HCT116 (cell line): ENCODE measurements at regions of chr16 and their contacts with region 1.

Region 1: DNA sequence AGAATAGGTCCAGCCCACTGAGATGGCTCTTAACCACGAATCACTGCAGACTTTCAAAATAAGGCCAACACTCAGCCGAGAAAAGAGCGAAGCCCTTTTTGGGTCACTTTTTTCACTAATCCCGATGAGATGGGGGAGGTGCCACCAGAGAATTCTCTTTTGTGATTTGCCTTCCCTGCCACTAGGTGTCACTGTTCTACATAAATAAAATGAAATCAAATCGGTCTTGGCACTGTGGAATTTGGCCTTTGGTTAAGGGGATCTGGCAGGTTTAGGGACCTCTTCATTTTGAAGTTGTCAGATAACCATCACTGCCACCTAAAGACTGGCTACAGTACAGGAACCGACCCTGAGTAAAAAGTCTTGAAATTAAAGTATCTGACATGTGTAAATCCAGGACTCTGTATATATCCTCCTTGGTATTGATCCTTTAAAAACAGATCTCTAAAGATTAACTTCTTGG is 147.0 kb downstream of the HS3ST4 start:
- DNase-seq: peak; percentile 27
- ATAC-seq: peak; percentile 57
- H3K4me3 ChIP-seq: no peak overlapping the region
- H3K27ac ChIP-seq: no peak overlapping the region
- H3K4me1 ChIP-seq: no peaks in the 10 kb centered on the region
- H3K27me3 ChIP-seq: no peaks in the 10 kb centered on the region
- CTCF ChIP-seq: peak; percentile 31 to 77 (median 61); a peak in 5 of 6 replicates
- POLR2A ChIP-seq: no peak
- RAD21 ChIP-seq: peak; percentile 60

Region 2: DNA sequence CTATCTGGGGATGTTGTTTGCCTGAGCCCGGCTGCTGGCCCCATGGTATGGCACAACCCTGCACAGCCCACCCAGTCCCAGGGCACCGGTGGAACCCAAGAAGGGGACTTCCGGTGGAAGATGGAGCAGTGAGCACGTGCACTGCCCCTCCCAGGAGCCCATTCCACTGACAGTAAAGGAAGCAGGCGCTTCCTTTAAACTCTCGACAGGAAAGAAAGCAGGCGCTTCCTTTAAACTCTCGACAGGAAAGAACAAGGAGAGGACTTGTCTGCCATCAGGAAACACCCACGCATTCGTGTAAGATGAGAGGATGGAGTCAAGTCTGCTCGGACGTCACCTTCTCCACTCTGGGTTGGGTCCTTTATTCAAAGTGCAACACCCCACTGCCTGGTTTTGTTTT is 1616.9 kb after region 1 on chr16:
- CTCF ChIA-PET with region 1: no interaction called
- POLR2A ChIA-PET with region 1: no interaction called
- RAD21 ChIA-PET with region 1: no interaction called
- intact Hi-C with region 1: loop called (anchors 2 kb)
- DNase-seq: no peak
- ATAC-seq: no peak
- H3K4me3 ChIP-seq: no peak overlapping the region
- H3K27ac ChIP-seq: no peak overlapping the region
- H3K4me1 ChIP-seq: no peaks in the 10 kb centered on the region
- H3K27me3 ChIP-seq: no peaks in the 10 kb centered on the region
- CTCF ChIP-seq: no peak
- POLR2A ChIP-seq: no peak
- RAD21 ChIP-seq: no peak